ENCODE measurements at regions of chr3 and their contacts with region 1.

Region 1: DNA sequence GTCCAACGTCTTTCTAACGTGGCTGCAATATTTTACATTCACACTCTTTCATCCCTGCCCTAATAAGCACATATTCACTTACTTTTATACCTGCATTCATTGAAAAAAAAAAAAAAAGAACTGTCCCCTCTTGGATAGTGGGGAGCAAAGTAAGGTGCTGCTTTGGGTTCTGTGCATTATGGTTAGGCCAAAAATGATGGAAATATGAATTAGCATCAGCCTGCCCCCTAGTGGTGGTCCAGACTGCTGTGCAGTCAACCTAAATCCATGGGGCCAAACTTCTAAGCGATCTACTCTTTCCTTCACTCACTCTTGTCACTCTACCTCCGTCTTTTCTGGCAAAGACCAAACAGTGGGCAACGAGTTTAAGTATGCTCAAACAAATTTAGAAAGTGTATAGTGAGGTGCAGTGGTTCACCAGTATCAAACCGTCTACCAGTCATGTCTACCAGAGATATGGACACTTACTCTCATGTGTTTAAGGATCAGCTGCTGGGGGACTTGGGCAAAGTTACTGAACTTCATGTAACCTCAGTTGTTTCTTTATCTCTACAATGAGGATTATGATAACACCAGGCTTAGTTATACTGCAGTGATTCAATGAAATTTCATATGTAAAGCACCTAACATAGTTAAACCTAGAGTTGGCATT is 61.5 kb upstream of the GRM7 start:
- DNase-seq: peak; percentile 75
- H3K4me3 ChIP-seq: no peak overlapping the region
- H3K27ac ChIP-seq: no peak overlapping the region
- H3K4me1 ChIP-seq: no peaks in the 10 kb centered on the region
- CTCF ChIP-seq: peak; percentile 94

Region 2: DNA sequence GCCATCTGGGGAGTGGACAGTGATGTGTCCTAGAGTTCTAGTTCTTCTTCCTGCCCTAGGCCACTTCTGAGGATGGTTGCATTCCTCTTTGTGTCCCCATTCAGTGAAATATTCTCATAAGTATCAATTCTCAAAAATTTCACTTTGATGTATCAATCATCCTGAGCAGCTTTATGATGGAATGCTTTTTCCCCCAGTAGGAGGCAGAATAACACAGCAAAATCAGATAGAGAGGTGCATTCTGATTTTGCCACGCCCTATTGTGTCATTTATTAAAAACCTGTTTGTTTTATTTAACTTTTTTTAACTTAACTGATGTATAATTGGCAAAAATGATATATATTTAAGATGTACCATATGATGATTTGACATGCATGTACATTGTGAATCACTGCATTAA is 594.5 kb before region 1 on chr3:
- CTCF ChIA-PET with region 1: no interaction called
- POLR2A ChIA-PET with region 1: no interaction called
- intact Hi-C with region 1: loop called (anchors 2 kb)
- DNase-seq: peak; percentile 40
- H3K4me3 ChIP-seq: no peak overlapping the region
- H3K27ac ChIP-seq: no peak overlapping the region
- H3K4me1 ChIP-seq: no peaks in the 10 kb centered on the region
- CTCF ChIP-seq: peak; percentile 83

Region 3: GRCh38 chr3:6504347-6504746 is 295.0 kb before region 1 on chr3:
- CTCF ChIA-PET with region 1: no interaction called
- POLR2A ChIA-PET with region 1: no interaction called
- intact Hi-C with region 1: loop called (anchors 10 kb)
- DNase-seq: no peak
- H3K4me3 ChIP-seq: no peak overlapping the region
- H3K27ac ChIP-seq: no peak overlapping the region
- H3K4me1 ChIP-seq: no peaks in the 10 kb centered on the region
- CTCF ChIP-seq: no peak

Region 4: DNA sequence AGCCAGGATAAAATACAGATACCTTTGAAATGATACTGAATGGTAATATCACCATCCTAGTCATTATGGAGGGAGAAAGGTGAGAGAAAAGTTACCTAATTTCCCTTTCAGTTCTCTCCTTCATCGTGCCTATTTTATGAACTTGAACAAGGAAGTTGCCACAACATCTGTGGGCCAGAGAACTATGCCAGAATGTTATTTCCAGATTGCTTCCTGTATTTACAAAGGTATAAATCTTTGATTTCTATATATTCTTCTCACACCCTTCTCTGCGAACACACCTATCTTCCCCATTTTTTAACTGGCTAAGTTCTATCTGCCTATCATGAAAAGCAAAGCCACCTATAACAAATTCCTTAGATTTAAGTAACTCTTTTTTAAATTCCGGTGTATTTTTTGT is 102.1 kb before region 1 on chr3:
- CTCF ChIA-PET with region 1: no interaction called
- POLR2A ChIA-PET with region 1: no interaction called
- intact Hi-C with region 1: no loop called
- DNase-seq: no peak
- H3K4me3 ChIP-seq: peak overlapping the region; percentile 1
- H3K27ac ChIP-seq: peak overlapping the region; percentile 19
- H3K4me1 ChIP-seq: peaks cover 13% of the 10 kb centered on the region
- CTCF ChIP-seq: no peak

Measured in OCI-LY7 (cell line).